ENCODE measurements at regions of chr9 and their contacts with region 1.

Region 1: DNA sequence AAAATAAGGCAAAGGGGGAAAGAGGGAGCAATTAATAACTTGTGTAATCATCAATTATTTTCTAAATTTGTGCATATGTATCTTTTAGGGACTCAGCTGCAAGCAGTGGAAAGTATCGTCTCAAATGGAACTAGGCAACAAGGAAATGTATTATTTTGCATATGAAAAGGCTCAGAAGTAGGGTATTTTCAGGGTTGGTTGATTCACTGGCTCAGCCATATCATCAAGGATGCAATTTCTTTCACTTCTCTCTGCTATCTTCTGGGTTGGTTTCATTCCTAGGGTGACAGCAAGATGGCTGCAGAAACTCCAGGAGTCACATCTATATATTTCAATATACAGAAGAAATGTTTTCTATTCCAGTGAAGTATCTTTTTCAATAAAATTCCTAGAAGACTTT is 509.8 kb downstream of the DMAC1 start:
- DNase-seq: no peak
- ATAC-seq: no peak
- H3K4me3 ChIP-seq: no peak overlapping the region
- H3K27ac ChIP-seq: no peak overlapping the region
- H3K4me1 ChIP-seq: no peaks in the 10 kb centered on the region
- H3K27me3 ChIP-seq: peaks cover 0 to under 1% (median 0%) of the 10 kb centered on the region in 7 donors
- CTCF ChIP-seq: no peak

Region 2: GRCh38 chr9:7223981-7224380 is 65.8 kb before region 1 on chr9:
- intact Hi-C with region 1: loop called in 1 of 10 experiments (anchors 10 kb)
- DNase-seq: no peak
- ATAC-seq: no peak
- H3K4me3 ChIP-seq: no peak overlapping the region
- H3K27ac ChIP-seq: no peak overlapping the region
- H3K4me1 ChIP-seq: no peaks in the 10 kb centered on the region
- H3K27me3 ChIP-seq: peaks cover 0 to 13% (median 0%) of the 10 kb centered on the region in 7 donors
- CTCF ChIP-seq: no peak